ENCODE measurements at regions of chr4 and their contacts with region 1.

Region 1: GRCh38 chr4:165288639-165289422 is 38.6 kb upstream of the MSMO1 start:
- DNase-seq: no peak
- ATAC-seq: no peak
- H3K4me3 ChIP-seq: no peak overlapping the region
- H3K4me3 Mint-ChIP-seq: peak overlapping the region in 2 of 10 donors; percentile 3 to 70
- H3K27ac ChIP-seq: no peak overlapping the region
- H3K27ac Mint-ChIP-seq: peak overlapping the region in 4 of 9 donors; percentile 1 to 54 (median 20)
- H3K4me1 ChIP-seq: peaks cover 0 to 4% of the 10 kb centered on the region in 2 donors
- H3K4me1 Mint-ChIP-seq: peaks cover 21 to 61% (median 49%) of the 10 kb centered on the region in 7 donors
- H3K27me3 ChIP-seq: no peaks in the 10 kb centered on the region
- H3K27me3 Mint-ChIP-seq: no peaks in the 10 kb centered on the region

Region 2: GRCh38 chr4:165124463-165124862 is 164.4 kb before region 1 on chr4:
- CTCF ChIA-PET with region 1: no interaction called
- POLR2A ChIA-PET with region 1: no interaction called
- intact Hi-C with region 1: no loop called
- DNase-seq: no peak
- ATAC-seq: no peak
- H3K4me3 ChIP-seq: no peak overlapping the region
- H3K4me3 Mint-ChIP-seq: no peak overlapping the region
- H3K27ac ChIP-seq: no peak overlapping the region
- H3K27ac Mint-ChIP-seq: no peak overlapping the region
- H3K4me1 ChIP-seq: no peaks in the 10 kb centered on the region
- H3K4me1 Mint-ChIP-seq: no peaks in the 10 kb centered on the region
- H3K27me3 ChIP-seq: no peaks in the 10 kb centered on the region
- H3K27me3 Mint-ChIP-seq: peaks cover 4 to 22% (median 11%) of the 10 kb centered on the region in 5 donors

Region 3: GRCh38 chr4:165301833-165302232 is 13.0 kb after region 1 on chr4:
- CTCF ChIA-PET with region 1: no interaction called
- POLR2A ChIA-PET with region 1: no interaction called
- intact Hi-C with region 1: loop called in 1 of 2 experiments (anchors 2 kb)
- DNase-seq: peak in 6 of 9 donors; percentile 20 to 41 (median 30)
- ATAC-seq: peak; percentile 70
- H3K4me3 ChIP-seq: peak overlapping the region; percentile 28
- H3K4me3 Mint-ChIP-seq: peak overlapping the region; percentile 53 to 91 (median 80)
- H3K27ac ChIP-seq: peak overlapping the region; percentile 66
- H3K27ac Mint-ChIP-seq: peak overlapping the region; percentile 81 to 93 (median 87)
- H3K4me1 ChIP-seq: peaks cover 0 to 8% of the 10 kb centered on the region in 2 donors
- H3K4me1 Mint-ChIP-seq: peaks cover 17 to 39% (median 30%) of the 10 kb centered on the region in 7 donors
- H3K27me3 ChIP-seq: no peaks in the 10 kb centered on the region
- H3K27me3 Mint-ChIP-seq: no peaks in the 10 kb centered on the region

Region 4: DNA sequence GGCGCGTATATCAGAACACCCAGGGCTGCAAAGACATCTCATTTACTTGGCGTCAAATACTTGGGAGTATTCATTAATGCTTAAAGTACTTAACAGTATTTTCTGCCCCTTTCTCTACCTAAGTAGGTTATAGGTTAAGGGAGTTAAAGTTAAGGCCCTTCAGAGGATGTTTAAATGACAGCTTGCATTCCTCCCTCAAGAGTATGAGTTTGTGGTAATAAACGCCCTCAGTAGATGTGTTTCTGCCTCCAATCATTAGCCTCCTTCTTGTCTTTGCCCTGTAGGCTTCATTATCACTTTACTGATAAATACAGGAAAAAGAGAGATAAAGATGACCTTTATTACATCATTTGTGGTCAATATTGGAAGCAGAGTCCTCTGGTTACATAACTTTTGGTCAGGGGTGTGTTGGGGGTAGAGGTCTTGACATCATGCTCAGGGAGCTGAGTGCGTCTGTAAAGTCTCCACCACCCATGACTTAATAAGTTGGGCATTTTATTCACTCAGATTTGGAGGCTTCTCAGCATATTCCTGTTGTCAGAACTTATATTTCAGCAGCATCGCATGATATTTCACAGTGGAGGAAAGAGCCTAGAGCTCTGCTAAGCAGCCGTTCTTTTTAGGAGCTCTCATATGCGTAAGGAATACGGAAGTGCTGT is 235.8 kb after region 1 on chr4:
- CTCF ChIA-PET with region 1: no interaction called
- POLR2A ChIA-PET with region 1: no interaction called
- intact Hi-C with region 1: no loop called
- DNase-seq: no peak
- ATAC-seq: no peak
- H3K4me3 ChIP-seq: no peak overlapping the region
- H3K4me3 Mint-ChIP-seq: no peak overlapping the region
- H3K27ac ChIP-seq: no peak overlapping the region
- H3K27ac Mint-ChIP-seq: no peak overlapping the region
- H3K4me1 ChIP-seq: no peaks in the 10 kb centered on the region
- H3K4me1 Mint-ChIP-seq: no peaks in the 10 kb centered on the region
- H3K27me3 ChIP-seq: no peaks in the 10 kb centered on the region
- H3K27me3 Mint-ChIP-seq: peaks cover 0 to 6% (median 0%) of the 10 kb centered on the region in 5 donors

Measured in naive thymus-derived CD4-positive, alpha-beta T cell (primary cell).